ENCODE measurements at regions of chr10 and their contacts with region 1.

Region 1: GRCh38 chr10:80498833-80499741 is 38.6 kb upstream of the SH2D4B start:
- DNase-seq: peak; percentile 88
- H3K4me3 ChIP-seq: no peak overlapping the region
- H3K27ac ChIP-seq: peak overlapping the region; percentile 81 to 89 (median 86)
- H3K4me1 ChIP-seq: peaks cover 31 to 97% (median 58%) of the 10 kb centered on the region in 4 donors
- H3K27me3 ChIP-seq: no peaks in the 10 kb centered on the region
- CTCF ChIP-seq: no peak
- EP300 ChIP-seq: no peak
- POLR2A ChIP-seq: no peak

Region 2: DNA sequence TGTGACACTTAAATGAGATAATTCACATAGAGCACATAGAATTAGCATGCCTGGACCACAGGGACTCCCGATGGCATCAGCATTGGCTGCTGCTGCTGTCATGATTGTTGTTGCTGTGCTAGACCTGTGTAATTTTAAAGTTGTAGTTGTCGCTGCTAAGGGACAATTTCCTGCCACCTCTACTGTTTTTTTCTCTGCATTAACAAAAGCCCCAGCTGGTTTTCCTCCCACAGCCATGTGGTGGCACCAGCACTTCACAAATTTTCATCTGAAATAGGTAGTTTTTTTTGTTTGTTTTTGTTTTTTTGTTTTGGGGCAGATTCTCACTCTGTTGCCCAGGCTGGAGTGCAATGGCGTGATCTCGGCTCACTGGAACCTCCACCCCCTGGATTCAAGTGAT is 116.1 kb before region 1 on chr10:
- in situ Hi-C with region 1: loop called in 1 of 4 experiments (anchors 10 kb)
- intact Hi-C with region 1: loop called (anchors 10 kb)
- DNase-seq: peak; percentile 44
- H3K4me3 ChIP-seq: no peak overlapping the region
- H3K27ac ChIP-seq: no peak overlapping the region
- H3K4me1 ChIP-seq: peaks cover 0 to 11% (median 4%) of the 10 kb centered on the region in 4 donors
- H3K27me3 ChIP-seq: no peaks in the 10 kb centered on the region
- CTCF ChIP-seq: peak; percentile 48 to 69 (median 57)
- EP300 ChIP-seq: no peak
- POLR2A ChIP-seq: no peak

Region 3: DNA sequence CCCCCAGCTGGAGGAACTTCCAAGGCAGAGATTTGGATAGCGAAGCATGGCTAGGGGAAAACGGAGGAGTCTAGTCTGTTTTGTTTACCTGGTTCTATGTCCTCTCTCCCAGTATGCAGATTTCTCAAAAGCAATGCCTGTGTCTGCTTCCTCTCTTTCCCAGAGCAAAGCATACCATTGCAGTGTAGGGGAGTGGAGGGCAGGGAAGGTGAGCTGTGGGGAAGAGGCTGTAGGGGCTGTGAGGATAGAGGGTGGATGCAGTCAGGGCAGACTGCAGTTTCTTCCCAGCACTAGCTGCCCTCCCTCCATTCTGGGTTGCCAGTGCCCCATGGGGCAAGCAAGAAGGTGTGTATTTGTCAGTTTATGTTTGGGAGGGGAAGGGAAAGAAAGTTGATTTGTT is 61.9 kb before region 1 on chr10:
- in situ Hi-C with region 1: loop called in 2 of 4 experiments (anchors 10 kb)
- intact Hi-C with region 1: no loop called
- DNase-seq: no peak
- H3K4me3 ChIP-seq: no peak overlapping the region
- H3K27ac ChIP-seq: no peak overlapping the region
- H3K4me1 ChIP-seq: no peaks in the 10 kb centered on the region
- H3K27me3 ChIP-seq: no peaks in the 10 kb centered on the region
- CTCF ChIP-seq: no peak
- EP300 ChIP-seq: no peak
- POLR2A ChIP-seq: no peak

Region 4: GRCh38 chr10:80444646-80445319 is 54.3 kb before region 1 on chr10:
- in situ Hi-C with region 1: loop called (anchors 5 to 10 kb)
- intact Hi-C with region 1: loop called (anchors 2 kb)
- DNase-seq: peak; percentile 63
- H3K4me3 ChIP-seq: no peak overlapping the region
- H3K27ac ChIP-seq: no peak overlapping the region
- H3K4me1 ChIP-seq: peaks cover 0 to 12% (median 0%) of the 10 kb centered on the region in 4 donors
- H3K27me3 ChIP-seq: no peaks in the 10 kb centered on the region
- CTCF ChIP-seq: peak; percentile 66 to 96 (median 88)
- EP300 ChIP-seq: no peak
- POLR2A ChIP-seq: no peak

Region 5: GRCh38 chr10:80453701-80454513 is 45.2 kb before region 1 on chr10 and contains the start of gene TSPAN14:
- in situ Hi-C with region 1: loop called in 3 of 4 experiments (anchors 5 to 10 kb)
- intact Hi-C with region 1: loop called (anchors 2 kb)
- DNase-seq: peak; percentile 87
- H3K4me3 ChIP-seq: peak within 1 kb of the TSS; percentile 78 to 98 (median 82)
- H3K27ac ChIP-seq: peak within 1 kb of the TSS; percentile 97 to 100 (median 98)
- H3K4me1 ChIP-seq: peaks cover 18 to 46% (median 41%) of the 10 kb centered on the region in 4 donors
- H3K27me3 ChIP-seq: no peaks in the 10 kb centered on the region
- CTCF ChIP-seq: peak in 1 of 5 experiments; percentile 11
- EP300 ChIP-seq: no peak
- POLR2A ChIP-seq: peak; percentile 61
- total RNA-seq, gene TSPAN14: 18.9 to 72.9 (median 55.8) TPM

Measured in transverse colon (tissue), 4 donors.